ENCODE measurements at regions of chr2 and their contacts with region 1.

Region 1: GRCh38 chr2:158753641-158754611 is 41.2 kb upstream of the DAPL1 start:
- DNase-seq: peak; percentile 63
- ATAC-seq: peak; percentile 94
- H3K4me3 ChIP-seq: no peak overlapping the region
- H3K27ac ChIP-seq: no peak overlapping the region
- H3K4me1 ChIP-seq: no peaks in the 10 kb centered on the region
- H3K27me3 ChIP-seq: peaks cover 7% of the 10 kb centered on the region
- CTCF ChIP-seq: peak; percentile 93

Region 2: DNA sequence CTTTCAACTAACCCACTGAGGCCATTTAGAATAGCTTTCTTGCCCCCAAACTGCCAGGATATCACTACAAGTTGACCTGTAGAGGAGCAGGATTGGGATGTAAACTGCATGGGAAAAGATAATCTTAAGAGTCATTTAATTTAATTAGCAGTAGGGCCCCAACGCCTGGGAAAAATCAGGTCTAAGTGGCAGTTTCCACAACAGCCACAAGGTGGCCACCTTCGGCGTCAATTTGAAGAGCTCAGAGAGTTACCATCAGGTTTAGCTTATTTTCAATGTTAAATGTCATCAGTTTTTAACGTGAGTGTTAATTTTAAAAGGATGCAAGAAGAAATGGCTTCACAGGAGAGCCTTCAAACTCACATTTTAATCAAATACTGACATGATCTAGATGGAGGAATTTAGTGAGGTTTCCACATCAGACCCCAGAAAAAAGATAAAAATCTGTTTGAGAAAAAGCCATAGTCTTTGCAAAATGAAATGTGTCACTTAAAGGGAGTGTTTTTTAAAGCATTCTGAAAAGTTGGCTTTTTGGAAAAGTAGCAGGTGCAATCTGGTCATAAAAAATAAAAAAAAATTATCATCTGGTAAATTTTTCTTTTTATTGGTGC is 729.5 kb before region 1 on chr2:
- CTCF ChIA-PET with region 1: interaction called, 12 read pairs
- POLR2A ChIA-PET with region 1: no interaction called
- in situ Hi-C with region 1: no loop called
- intact Hi-C with region 1: loop called (anchors 5 kb)
- DNase-seq: no peak
- ATAC-seq: peak; percentile 84
- H3K4me3 ChIP-seq: no peak overlapping the region
- H3K27ac ChIP-seq: no peak overlapping the region
- H3K4me1 ChIP-seq: no peaks in the 10 kb centered on the region
- H3K27me3 ChIP-seq: 0 out of 2 replicates have a peak, but pooled peaks cover 2% of the 10 kb centered on the region
- CTCF ChIP-seq: peak; percentile 89

Region 3: GRCh38 chr2:158034199-158034866 is 719.6 kb before region 1 on chr2:
- CTCF ChIA-PET with region 1: interaction called, 3 read pairs
- POLR2A ChIA-PET with region 1: no interaction called
- in situ Hi-C with region 1: no loop called
- intact Hi-C with region 1: loop called (anchors 1 kb)
- DNase-seq: peak; percentile 36
- ATAC-seq: peak; percentile 95
- H3K4me3 ChIP-seq: no peak overlapping the region
- H3K27ac ChIP-seq: no peak overlapping the region
- H3K4me1 ChIP-seq: no peaks in the 10 kb centered on the region
- H3K27me3 ChIP-seq: peaks cover 12% of the 10 kb centered on the region
- CTCF ChIP-seq: peak; percentile 67

Region 4: DNA sequence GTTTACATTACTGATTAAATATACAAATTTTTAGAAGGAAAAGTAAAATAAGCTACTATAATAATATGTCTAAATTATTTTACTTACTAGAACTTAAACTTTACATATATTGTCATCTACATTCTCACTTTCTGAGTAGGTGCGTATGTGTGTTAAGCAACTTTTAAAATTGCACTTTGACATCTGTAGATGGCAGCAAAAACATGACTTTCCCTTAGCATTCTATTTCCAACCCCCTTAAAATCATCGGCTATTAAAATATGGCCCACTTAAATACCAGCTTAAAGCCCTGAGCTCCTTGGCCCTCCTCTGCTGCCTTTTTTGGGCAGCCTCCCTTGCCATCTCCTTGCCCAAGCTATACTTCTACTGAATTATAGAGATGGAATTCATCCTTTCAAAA is 574.3 kb before region 1 on chr2:
- CTCF ChIA-PET with region 1: interaction called, 5 read pairs
- POLR2A ChIA-PET with region 1: no interaction called
- in situ Hi-C with region 1: no loop called
- intact Hi-C with region 1: loop called (anchors 5 kb)
- DNase-seq: no peak
- ATAC-seq: 0 out of 2 replicates have a peak, but pooled peaks have one; percentile 63
- H3K4me3 ChIP-seq: no peak overlapping the region
- H3K27ac ChIP-seq: no peak overlapping the region
- H3K4me1 ChIP-seq: no peaks in the 10 kb centered on the region
- H3K27me3 ChIP-seq: peaks cover 2% of the 10 kb centered on the region; the same call in 1 of the 2 replicates
- CTCF ChIP-seq: peak; percentile 45; the same call in 1 of the 2 replicates

Region 5: DNA sequence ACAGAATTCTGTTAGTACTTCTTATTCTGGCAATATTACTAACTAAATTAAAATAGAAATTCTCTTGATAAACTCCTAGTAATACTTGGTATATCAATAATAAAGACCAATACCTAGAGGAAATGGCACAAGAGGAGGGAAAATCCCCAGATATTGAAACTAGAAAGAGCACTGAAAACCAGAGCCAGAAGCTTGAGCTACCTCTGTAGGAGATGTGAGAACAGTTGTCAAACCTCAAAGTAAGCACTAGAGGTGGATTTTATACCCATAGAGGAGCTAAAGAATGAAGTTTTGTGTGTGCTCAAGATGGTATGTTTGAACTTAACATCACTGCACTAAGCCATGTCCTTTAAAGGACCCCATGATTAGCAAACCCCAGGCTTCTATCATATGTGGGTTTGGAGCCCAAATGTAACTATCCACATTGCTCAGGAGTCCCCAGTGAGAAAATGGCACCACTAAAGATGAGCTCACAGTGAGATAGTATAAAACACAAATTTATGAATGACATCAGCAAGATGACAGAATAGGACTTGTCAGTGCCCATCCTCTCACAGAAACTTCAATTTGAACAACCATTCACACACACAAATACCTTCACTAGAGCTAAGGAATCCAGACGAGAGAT is 175.1 kb before region 1 on chr2:
- CTCF ChIA-PET with region 1: no interaction called
- POLR2A ChIA-PET with region 1: no interaction called
- in situ Hi-C with region 1: no loop called
- intact Hi-C with region 1: no loop called
- DNase-seq: no peak
- ATAC-seq: no peak
- H3K4me3 ChIP-seq: no peak overlapping the region
- H3K27ac ChIP-seq: no peak overlapping the region
- H3K4me1 ChIP-seq: peaks cover 6% of the 10 kb centered on the region
- H3K27me3 ChIP-seq: no peaks in the 10 kb centered on the region
- CTCF ChIP-seq: no peak

Region 6: GRCh38 chr2:158633261-158633660 is 120.7 kb before region 1 on chr2:
- CTCF ChIA-PET with region 1: no interaction called
- POLR2A ChIA-PET with region 1: no interaction called
- in situ Hi-C with region 1: no loop called
- intact Hi-C with region 1: no loop called
- DNase-seq: no peak
- ATAC-seq: no peak
- H3K4me3 ChIP-seq: no peak overlapping the region
- H3K27ac ChIP-seq: no peak overlapping the region
- H3K4me1 ChIP-seq: no peaks in the 10 kb centered on the region
- H3K27me3 ChIP-seq: no peaks in the 10 kb centered on the region
- CTCF ChIP-seq: no peak

Region 7: GRCh38 chr2:158823486-158824237 is 69.7 kb after region 1 on chr2:
- CTCF ChIA-PET with region 1: interaction called, 14 read pairs
- POLR2A ChIA-PET with region 1: no interaction called
- in situ Hi-C with region 1: no loop called
- intact Hi-C with region 1: no loop called
- DNase-seq: no peak
- ATAC-seq: no peak
- H3K4me3 ChIP-seq: no peak overlapping the region
- H3K27ac ChIP-seq: no peak overlapping the region
- H3K4me1 ChIP-seq: no peaks in the 10 kb centered on the region
- H3K27me3 ChIP-seq: peaks cover 11% of the 10 kb centered on the region
- CTCF ChIP-seq: no peak